H1 (cell line): ENCODE measurements at regions of chr3 and their contacts with region 1.

Region 1: GRCh38 chr3:185176750-185177359 is 24.0 kb upstream of the C3orf70 start:
- DNase-seq: peak in 1 of 2 experiments; percentile 71
- H3K4me3 ChIP-seq: no peak overlapping the region
- H3K27ac ChIP-seq: no peak overlapping the region
- H3K4me1 ChIP-seq: peaks cover 3 to 16% (median 7%) of the 10 kb centered on the region in 4 experiments; a peak in 6 of 7 replicates
- H3K27me3 ChIP-seq: no peaks in the 10 kb centered on the region
- CTCF ChIP-seq: peak in 2 of 3 experiments; percentile 58 to 68; a peak in 3 of 4 replicates
- EP300 ChIP-seq: no peak
- POLR2A ChIP-seq: no peak
- RAD21 ChIP-seq: peak; percentile 68

Region 2: GRCh38 chr3:184874709-184875644 is 301.9 kb before region 1 on chr3:
- CTCF ChIA-PET with region 1: interaction called, 15 read pairs
- POLR2A ChIA-PET with region 1: no interaction called
- DNase-seq: no peak
- H3K4me3 ChIP-seq: no peak overlapping the region
- H3K27ac ChIP-seq: no peak overlapping the region
- H3K4me1 ChIP-seq: no peaks in the 10 kb centered on the region
- H3K27me3 ChIP-seq: no peaks in the 10 kb centered on the region
- CTCF ChIP-seq: peak in 2 of 3 experiments; percentile 61 to 73; a peak in 3 of 4 replicates
- EP300 ChIP-seq: no peak
- POLR2A ChIP-seq: no peak
- RAD21 ChIP-seq: peak; percentile 89 to 95

Region 3: DNA sequence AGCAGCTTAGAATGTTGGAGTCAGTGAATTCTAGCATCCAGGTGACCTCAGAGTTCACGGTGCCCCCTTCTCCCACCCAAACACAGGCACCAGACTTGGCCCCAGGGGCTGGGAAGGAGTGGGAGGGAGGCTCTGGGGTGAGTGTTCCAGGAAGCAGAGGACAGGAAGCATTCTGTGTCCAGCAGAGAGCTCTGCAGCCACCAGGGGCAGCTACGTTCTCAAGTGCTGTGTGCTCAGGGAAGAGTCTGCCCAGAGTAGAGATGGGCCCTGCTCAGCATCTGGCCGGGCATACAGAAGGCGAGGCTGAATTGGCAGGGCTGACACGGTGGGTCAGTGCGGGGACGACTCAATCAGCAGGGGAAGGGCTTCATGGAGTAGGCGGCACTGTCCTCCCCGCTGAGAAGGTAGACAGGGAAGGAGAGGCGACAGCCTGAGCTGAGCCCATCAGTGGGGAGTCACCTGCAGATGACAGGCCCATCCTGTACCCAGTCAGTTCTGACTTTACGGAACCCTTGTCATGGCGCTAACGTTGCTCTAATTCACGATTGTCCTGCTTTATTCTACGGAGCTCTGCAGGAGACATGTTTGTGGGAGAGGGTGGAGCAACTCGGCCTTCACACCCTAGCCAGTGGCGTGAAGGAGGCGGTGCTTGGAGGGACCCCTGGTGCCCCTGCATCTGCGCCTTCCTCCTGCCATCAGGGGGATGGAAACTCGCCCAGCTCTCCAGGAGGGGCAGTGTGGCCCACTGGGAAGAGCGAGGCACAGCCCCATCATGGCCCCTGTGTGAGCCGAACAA is 106.2 kb before region 1 on chr3:
- CTCF ChIA-PET with region 1: interaction called, 49 read pairs
- POLR2A ChIA-PET with region 1: interaction called, 3 read pairs
- DNase-seq: peak in 1 of 2 experiments; percentile 64
- H3K4me3 ChIP-seq: no peak overlapping the region
- H3K27ac ChIP-seq: no peak overlapping the region
- H3K4me1 ChIP-seq: peaks cover 0 to 12% (median 6%) of the 10 kb centered on the region in 4 experiments; a peak in 6 of 7 replicates
- H3K27me3 ChIP-seq: no peaks in the 10 kb centered on the region
- CTCF ChIP-seq: peak; percentile 67 to 80 (median 75)
- EP300 ChIP-seq: no peak
- POLR2A ChIP-seq: no peak
- RAD21 ChIP-seq: peak; percentile 59 to 70

Region 4: GRCh38 chr3:185164428-185165217 is 12.2 kb before region 1 on chr3:
- CTCF ChIA-PET with region 1: interaction called, 31 read pairs
- POLR2A ChIA-PET with region 1: interaction called, 7 read pairs
- DNase-seq: no peak
- H3K4me3 ChIP-seq: no peak overlapping the region; a peak in 1 of 8 replicates
- H3K27ac ChIP-seq: no peak overlapping the region
- H3K4me1 ChIP-seq: 0 out of 7 replicates have a peak, but pooled peaks cover 0 to 2% (median 0%) of the 10 kb centered on the region in 4 experiments
- H3K27me3 ChIP-seq: peaks cover 0 to 2% (median 0%) of the 10 kb centered on the region in 4 experiments; a peak in 1 of 7 replicates
- CTCF ChIP-seq: no peak
- EP300 ChIP-seq: no peak
- POLR2A ChIP-seq: no peak
- RAD21 ChIP-seq: no peak

Region 5: DNA sequence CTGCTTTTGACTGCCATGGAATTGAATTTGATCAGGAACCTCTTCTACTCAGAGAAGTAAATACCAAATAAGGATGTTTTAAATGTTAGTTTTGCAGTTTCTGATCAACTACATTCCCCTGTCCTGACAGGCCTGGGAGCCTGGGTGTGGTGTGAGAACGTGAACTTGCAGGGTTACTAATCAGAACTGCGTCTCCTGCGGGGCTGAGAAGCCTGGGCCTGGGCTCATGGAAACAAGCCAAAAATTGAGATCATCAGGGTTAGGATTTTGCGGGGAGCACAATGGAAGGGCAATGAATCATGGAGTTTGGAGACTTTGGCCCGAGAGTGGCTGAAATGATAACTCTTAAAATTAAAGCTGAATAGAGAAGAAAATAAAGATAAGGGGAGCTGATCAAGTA is 23.8 kb after region 1 on chr3:
- CTCF ChIA-PET with region 1: interaction called, 12 read pairs
- POLR2A ChIA-PET with region 1: no interaction called
- DNase-seq: no peak
- H3K4me3 ChIP-seq: no peak overlapping the region
- H3K27ac ChIP-seq: no peak overlapping the region
- H3K4me1 ChIP-seq: no peaks in the 10 kb centered on the region
- H3K27me3 ChIP-seq: no peaks in the 10 kb centered on the region
- CTCF ChIP-seq: no peak
- EP300 ChIP-seq: no peak
- POLR2A ChIP-seq: no peak
- RAD21 ChIP-seq: no peak